ENCODE measurements at regions of chr11 and their contacts with region 1.

Region 1: GRCh38 chr11:11841723-11842420 is at the start of gene USP47:
- DNase-seq: peak; percentile 93 to 96 (median 95)
- ATAC-seq: peak; percentile 78 to 93 (median 92)
- H3K4me3 ChIP-seq: peak within 1 kb of the TSS; percentile 54 to 86 (median 77)
- H3K27ac ChIP-seq: peak within 1 kb of the TSS; percentile 87 to 99 (median 96)
- H3K4me1 ChIP-seq: peaks cover 0 to 51% (median 36%) of the 10 kb centered on the region in 12 donors
- H3K27me3 ChIP-seq: no peaks in the 10 kb centered on the region
- CTCF ChIP-seq: peak in 11 of 12 donors; percentile 33 to 77 (median 57)
- POLR2A ChIP-seq: peak in 1 of 2 donors; percentile 82
- total RNA-seq, gene USP47: 42.3 to 89.6 (median 54.3) TPM

Region 2: GRCh38 chr11:11857769-11858168 is 15.9 kb after region 1 on chr11:
- intact Hi-C with region 1: loop called in 1 of 10 experiments (anchors 2 kb)
- DNase-seq: no peak
- ATAC-seq: peak in 2 of 4 donors; percentile 23 to 32
- H3K4me3 ChIP-seq: peak overlapping the region in 5 of 12 donors; percentile 10 to 24 (median 15)
- H3K27ac ChIP-seq: peak overlapping the region in 1 of 12 donors; percentile 8
- H3K4me1 ChIP-seq: peaks cover 0 to 89% (median 57%) of the 10 kb centered on the region in 12 donors
- H3K27me3 ChIP-seq: no peaks in the 10 kb centered on the region
- CTCF ChIP-seq: no peak
- POLR2A ChIP-seq: no peak

Region 3: GRCh38 chr11:11884774-11885481 is 43.1 kb after region 1 on chr11:
- intact Hi-C with region 1: loop called in 1 of 10 experiments (anchors 5 kb)
- DNase-seq: no peak
- ATAC-seq: no peak
- H3K4me3 ChIP-seq: no peak overlapping the region
- H3K27ac ChIP-seq: no peak overlapping the region
- H3K4me1 ChIP-seq: peaks cover 0 to 24% (median 16%) of the 10 kb centered on the region in 12 donors
- H3K27me3 ChIP-seq: no peaks in the 10 kb centered on the region
- CTCF ChIP-seq: no peak
- POLR2A ChIP-seq: no peak

Measured in heart left ventricle (tissue), 16 donors.